ENCODE measurements at regions of chr18 and their contacts with region 1.

Region 1: DNA sequence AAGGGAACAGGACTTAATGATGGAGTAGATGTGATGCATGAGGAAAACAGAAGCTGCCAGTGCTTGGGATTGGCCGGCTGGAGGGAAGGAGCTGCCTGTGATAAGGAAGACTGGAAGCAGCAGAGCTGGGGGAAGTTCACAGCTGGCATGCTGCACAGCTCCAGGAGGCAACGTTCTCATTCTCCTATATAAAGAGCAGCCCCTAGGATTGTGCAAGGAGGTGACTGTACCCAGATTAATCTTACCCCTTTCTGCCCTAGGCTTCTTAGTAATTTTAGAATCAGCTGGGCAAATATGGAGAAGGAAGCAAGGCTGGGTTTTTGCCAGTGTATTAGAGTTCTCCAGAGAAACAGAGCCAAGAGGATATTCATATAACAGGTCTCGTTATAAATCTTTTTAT is 155.8 kb downstream of the ALPK2 start:
- DNase-seq: no peak
- ATAC-seq: no peak
- H3K4me3 ChIP-seq: no peak overlapping the region
- H3K27ac ChIP-seq: no peak overlapping the region
- H3K4me1 ChIP-seq: no peaks in the 10 kb centered on the region
- H3K27me3 ChIP-seq: no peaks in the 10 kb centered on the region

Region 2: DNA sequence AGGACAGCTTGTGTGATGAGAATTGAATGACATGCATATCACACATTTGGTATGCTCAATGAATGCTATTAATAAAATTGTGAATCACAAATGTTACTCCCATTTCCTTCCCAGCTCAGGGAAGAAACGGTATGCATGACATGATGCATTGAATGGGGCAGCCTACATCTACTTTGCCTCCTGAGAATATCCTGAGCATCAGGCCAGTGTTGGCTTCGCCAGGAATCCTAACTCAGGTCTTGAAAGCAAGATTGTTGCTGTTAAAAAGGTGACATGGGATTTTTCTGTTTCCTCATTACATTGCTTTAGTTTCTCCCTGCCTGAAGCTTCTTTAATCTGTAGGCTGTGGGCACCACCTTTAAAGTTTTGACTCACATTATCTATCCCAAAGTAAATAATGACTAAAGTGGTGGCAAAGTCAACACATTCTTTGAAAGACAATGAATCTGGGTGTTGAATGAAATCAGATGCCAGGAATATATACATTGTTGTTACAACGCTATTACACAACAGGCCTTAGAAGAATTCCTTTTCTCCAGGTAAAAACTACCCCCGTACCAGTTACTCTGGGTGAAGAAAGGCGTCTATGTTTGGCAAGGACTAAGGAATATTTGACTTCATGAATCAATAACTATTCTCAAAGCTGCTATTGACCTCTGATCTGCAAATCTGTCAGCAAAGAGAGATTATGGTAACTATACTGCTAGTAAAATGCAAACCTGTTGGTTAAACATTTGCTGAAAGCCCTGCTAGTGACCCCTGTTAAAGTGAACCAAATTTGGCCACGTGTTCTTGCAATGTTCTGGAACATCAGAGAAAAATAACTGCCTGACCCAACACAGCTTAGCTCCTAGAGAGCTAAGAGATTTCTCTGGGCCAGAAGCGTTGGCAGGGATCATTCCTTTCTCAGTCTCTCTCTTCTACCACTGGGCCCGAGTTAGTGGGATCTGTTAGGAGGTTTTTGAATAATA is 459.5 kb before region 1 on chr18:
- intact Hi-C with region 1: loop called in 1 of 4 experiments (anchors 5 kb)
- DNase-seq: no peak
- ATAC-seq: no peak
- H3K4me3 ChIP-seq: no peak overlapping the region
- H3K27ac ChIP-seq: no peak overlapping the region
- H3K4me1 ChIP-seq: no peaks in the 10 kb centered on the region
- H3K27me3 ChIP-seq: no peaks in the 10 kb centered on the region

Measured in right cardiac atrium (tissue), 5 donors.